Common myeloid progenitor, CD34-positive (primary cell): ENCODE measurements at regions of chr5 and their contacts with region 1.

Region 1: DNA sequence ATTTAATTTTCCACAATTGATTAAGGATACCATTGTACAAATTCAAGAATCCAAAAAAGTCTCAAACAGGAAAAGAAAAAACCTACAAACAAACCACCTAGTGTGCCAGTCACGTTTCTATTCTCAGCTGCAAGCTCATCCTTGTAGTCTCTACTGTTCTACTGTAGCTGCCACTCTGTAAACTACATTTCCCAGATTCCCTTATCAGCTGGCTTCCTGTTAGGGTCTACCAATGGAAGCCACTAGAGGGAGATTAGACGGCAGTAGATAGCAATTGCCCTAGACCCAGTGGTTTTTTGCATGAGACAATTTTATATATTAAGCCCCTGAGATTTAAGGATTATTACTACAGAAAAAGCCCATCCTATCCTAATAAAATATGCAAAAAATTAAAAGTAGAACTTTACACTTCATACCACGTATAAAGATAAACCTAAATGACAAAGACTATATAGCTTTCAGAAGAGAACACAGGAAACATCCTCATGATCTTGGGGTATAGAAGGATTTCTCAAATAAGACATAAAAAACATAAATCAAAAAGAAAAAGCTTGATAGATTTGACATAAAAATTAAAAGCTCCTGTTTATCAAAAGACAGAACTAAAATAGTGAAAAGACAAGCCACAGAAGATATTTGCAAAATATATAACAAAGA is 37.4 kb downstream of the P4HA2 start:
- DNase-seq: peak; percentile 67 to 82 (median 81)
- H3K4me3 ChIP-seq: no peak overlapping the region
- H3K27ac ChIP-seq: no peak overlapping the region
- H3K4me1 ChIP-seq: no peaks in the 10 kb centered on the region
- H3K27me3 ChIP-seq: no peaks in the 10 kb centered on the region

Region 2: DNA sequence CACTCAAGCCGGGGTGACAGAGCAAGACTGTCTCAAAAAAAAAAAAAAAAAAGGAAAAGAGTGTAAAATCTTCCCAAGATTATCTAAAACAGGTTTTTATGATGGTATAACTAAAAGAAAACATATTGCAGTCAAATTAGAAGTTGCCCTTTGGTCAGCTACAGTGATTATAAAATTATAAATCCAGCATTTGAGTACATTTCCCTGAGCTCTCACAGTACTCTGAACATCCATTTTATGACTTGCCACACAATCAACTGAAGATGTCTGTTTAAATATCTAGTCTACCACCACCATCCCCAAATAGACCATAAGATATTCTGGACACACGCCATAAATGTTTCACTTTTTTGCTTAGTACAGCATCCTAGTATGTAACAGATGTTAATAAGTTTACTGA is 39.7 kb before region 1 on chr5:
- CTCF ChIA-PET with region 1: no interaction called
- POLR2A ChIA-PET with region 1: no interaction called
- DNase-seq: no peak
- H3K4me3 ChIP-seq: no peak overlapping the region
- H3K27ac ChIP-seq: no peak overlapping the region
- H3K4me1 ChIP-seq: peaks cover 0 to 3% (median 1%) of the 10 kb centered on the region in 4 experiments
- H3K27me3 ChIP-seq: no peaks in the 10 kb centered on the region

Region 3: GRCh38 chr5:132180134-132180745 is 10.0 kb before region 1 on chr5:
- CTCF ChIA-PET with region 1: interaction called, 29 read pairs
- POLR2A ChIA-PET with region 1: interaction called, 4 read pairs
- DNase-seq: peak; percentile 63 to 81 (median 78)
- H3K4me3 ChIP-seq: no peak overlapping the region
- H3K27ac ChIP-seq: peak overlapping the region in 1 of 2 experiments; percentile 54
- H3K4me1 ChIP-seq: peaks cover 0 to 21% (median 13%) of the 10 kb centered on the region in 4 experiments
- H3K27me3 ChIP-seq: no peaks in the 10 kb centered on the region

Region 4: DNA sequence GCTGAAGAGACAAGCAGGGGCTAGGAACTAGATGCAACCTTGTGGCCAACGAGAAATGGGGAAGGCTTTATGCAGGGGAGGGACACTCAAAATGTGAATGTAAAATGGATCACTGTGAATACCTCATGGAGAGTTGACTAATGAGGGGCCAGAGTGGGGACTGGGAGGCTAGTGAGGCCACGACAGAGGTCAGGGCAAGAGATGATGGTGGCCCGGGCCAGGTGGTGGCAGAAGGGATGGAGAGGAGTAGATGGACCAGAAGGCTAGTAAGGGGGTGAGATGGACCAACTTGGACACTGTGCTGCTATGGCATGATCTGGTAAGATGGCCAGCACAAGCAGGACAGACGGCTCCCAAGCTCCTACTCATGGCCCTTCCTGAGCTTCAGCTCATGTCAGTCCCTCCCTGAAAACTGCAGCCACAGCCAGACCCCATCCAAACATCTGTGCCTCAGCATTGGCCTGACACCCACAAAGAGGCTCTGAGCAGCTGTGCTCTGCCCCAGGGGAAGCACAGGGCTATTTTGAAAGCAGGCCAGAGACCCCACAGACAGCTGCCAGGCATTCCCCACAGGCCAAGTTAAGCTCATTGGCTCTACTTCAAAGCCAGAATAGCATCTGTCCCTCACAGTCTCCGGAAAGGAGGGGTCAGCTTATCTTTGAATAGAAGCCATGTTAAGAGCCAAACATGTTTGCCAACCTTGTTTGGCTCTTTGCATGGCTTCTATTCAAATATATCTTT is 15.3 kb after region 1 on chr5:
- CTCF ChIA-PET with region 1: interaction called, 22 read pairs
- POLR2A ChIA-PET with region 1: no interaction called
- DNase-seq: peak in 1 of 3 donors; percentile 8
- H3K4me3 ChIP-seq: no peak overlapping the region
- H3K27ac ChIP-seq: no peak overlapping the region
- H3K4me1 ChIP-seq: peaks cover 7 to 15% (median 14%) of the 10 kb centered on the region in 4 experiments
- H3K27me3 ChIP-seq: no peaks in the 10 kb centered on the region